Endothelial cell of umbilical vein (primary cell): ENCODE measurements at regions of chr12 and their contacts with region 1.

Region 1: DNA sequence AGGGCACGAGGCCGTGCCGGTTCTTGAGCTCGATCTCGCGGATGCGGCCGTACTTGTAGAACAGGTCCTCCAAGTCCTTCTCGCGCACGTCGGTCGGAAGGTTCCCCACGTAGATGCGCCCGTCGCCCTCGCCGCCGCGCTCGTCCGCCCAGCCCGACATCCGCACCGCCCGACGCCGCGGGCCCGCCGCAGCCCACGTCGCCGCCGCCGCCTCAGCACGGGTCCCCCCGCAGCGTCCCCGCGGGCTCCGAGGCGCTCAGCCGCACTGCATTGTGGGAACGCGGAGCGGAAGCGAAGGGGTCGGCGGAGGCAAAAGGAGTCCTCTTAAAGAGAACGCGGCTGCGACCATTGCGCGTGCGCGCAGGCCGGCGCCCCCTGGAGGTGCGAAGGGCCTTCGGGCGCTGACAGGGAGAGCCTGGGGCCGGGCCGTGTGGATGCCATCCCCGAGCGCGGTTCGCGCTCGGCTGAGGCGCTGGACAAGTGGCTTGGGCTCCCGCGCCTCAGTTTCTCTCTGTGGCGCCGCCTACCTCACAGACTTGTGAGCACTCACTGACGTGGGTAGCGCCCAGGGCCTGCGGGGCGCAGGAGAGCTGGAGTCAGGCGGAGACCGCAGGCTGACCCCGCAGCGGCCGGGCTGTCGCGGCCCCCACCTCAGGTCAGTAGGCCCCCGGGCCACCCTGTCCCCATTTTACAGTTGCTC is at the start of gene SRSF9:
- DNase-seq: peak; percentile 96
- H3K4me3 ChIP-seq: peak within 1 kb of the TSS; percentile 54 to 90 (median 78)
- H3K27ac ChIP-seq: peak within 1 kb of the TSS; percentile 68
- H3K4me1 ChIP-seq: peaks cover 5% of the 10 kb centered on the region
- H3K27me3 ChIP-seq: no peaks in the 10 kb centered on the region
- CTCF ChIP-seq: peak; percentile 96 to 99
- POLR2A ChIP-seq: peak; percentile 87
- total RNA-seq, gene SRSF9: 226 and 238 TPM in 2 replicates

Region 2: GRCh38 chr12:120086801-120087621 is 382.6 kb before region 1 on chr12:
- CTCF ChIA-PET with region 1: no interaction called
- POLR2A ChIA-PET with region 1: no interaction called
- dilution Hi-C with region 1: no loop called
- intact Hi-C with region 1: no loop called
- DNase-seq: peak; percentile 99
- H3K4me3 ChIP-seq: peak overlapping the region in 2 of 3 experiments; percentile 17 to 37
- H3K27ac ChIP-seq: peak overlapping the region; percentile 11
- H3K4me1 ChIP-seq: peaks cover 6% of the 10 kb centered on the region
- H3K27me3 ChIP-seq: no peaks in the 10 kb centered on the region
- CTCF ChIP-seq: peak; percentile 98 to 100
- POLR2A ChIP-seq: peak; percentile 50

Region 3: GRCh38 chr12:120437754-120438494 is 31.7 kb before region 1 on chr12 and contains the start of gene COX6A1:
- CTCF ChIA-PET with region 1: interaction called, 6 read pairs
- POLR2A ChIA-PET with region 1: interaction called, 3 read pairs
- dilution Hi-C with region 1: no loop called
- intact Hi-C with region 1: loop called (anchors 1 kb)
- DNase-seq: peak; percentile 91
- H3K4me3 ChIP-seq: peak within 1 kb of the TSS; percentile 48 to 76 (median 49)
- H3K27ac ChIP-seq: peak within 1 kb of the TSS; percentile 2
- H3K4me1 ChIP-seq: peaks cover 14% of the 10 kb centered on the region
- H3K27me3 ChIP-seq: no peaks in the 10 kb centered on the region
- CTCF ChIP-seq: no peak
- POLR2A ChIP-seq: peak; percentile 93
- total RNA-seq, gene COX6A1: 299 and 302 TPM in 2 replicates

Region 4: DNA sequence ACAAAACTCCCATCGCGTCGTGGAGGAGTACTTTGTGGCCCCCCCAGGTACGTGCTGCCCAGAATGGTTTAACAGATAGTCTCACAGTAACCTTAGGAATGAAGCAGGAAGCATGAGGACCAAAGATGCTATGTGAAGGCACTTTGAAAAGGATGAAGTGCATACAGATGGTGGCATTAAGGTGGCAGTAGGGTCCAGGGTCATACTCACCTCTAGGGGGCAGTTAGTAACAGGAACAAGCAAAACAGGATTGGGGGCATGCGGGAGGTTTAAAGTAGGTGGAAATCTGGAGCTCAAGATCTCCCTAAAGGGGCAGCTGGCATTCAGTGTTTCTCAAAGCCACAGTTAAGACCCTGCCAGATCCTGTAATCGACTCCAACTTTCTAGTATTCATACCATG is 12.5 kb before region 1 on chr12:
- CTCF ChIA-PET with region 1: interaction called, 10 read pairs
- POLR2A ChIA-PET with region 1: interaction called, 4 read pairs
- dilution Hi-C with region 1: no loop called
- intact Hi-C with region 1: no loop called
- DNase-seq: no peak
- H3K4me3 ChIP-seq: no peak overlapping the region
- H3K27ac ChIP-seq: no peak overlapping the region
- H3K4me1 ChIP-seq: no peaks in the 10 kb centered on the region
- H3K27me3 ChIP-seq: no peaks in the 10 kb centered on the region
- CTCF ChIP-seq: peak in 1 of 2 donors; percentile 32
- POLR2A ChIP-seq: no peak

Region 5: DNA sequence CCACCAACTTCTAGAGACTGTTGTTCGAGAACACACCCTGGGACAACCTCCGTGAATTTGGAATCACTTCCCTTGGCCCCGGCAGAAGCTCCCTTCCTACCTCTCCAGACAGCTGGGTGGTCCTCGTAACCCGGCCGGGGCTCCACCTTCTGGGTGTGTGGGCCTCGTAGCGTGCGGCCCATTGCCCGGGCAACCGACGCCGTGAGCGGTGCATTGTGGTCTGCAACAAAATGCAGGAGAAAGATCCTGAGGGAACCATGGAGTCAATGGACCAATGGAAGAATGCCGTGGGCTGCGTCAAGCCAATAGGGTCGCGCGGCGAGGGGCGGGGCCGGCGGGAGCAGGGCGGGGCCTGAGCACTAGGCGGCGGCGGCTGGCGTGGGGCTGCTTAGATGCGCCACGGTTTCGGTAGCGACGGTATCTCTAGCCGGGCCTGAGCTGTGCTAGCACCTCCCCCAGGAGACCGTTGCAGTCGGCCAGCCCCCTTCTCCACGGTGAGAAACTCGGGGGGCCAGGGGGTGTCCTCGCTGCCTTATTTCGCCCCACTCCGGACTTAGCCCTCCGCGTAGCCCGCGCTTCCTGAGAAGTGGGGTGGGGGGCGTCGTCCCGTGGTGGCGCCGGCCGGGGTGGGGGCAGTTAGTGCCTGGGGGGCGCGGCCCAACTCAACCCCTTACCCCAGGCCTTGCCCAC is 26.3 kb after region 1 on chr12 and contains the start of gene DYNLL1:
- CTCF ChIA-PET with region 1: interaction called, 29 read pairs
- POLR2A ChIA-PET with region 1: interaction called, 24 read pairs
- dilution Hi-C with region 1: no loop called
- intact Hi-C with region 1: loop called (anchors 1 kb)
- DNase-seq: peak; percentile 98
- H3K4me3 ChIP-seq: peak within 1 kb of the TSS; percentile 64 to 98 (median 90)
- H3K27ac ChIP-seq: no peak within 1 kb of the TSS
- H3K4me1 ChIP-seq: peaks cover 15% of the 10 kb centered on the region
- H3K27me3 ChIP-seq: no peaks in the 10 kb centered on the region
- CTCF ChIP-seq: no peak
- POLR2A ChIP-seq: peak; percentile 99
- total RNA-seq, gene DYNLL1: 469 TPM in 2 replicates

Region 6: GRCh38 chr12:120528861-120529525 is 59.4 kb after region 1 on chr12 and contains the start of gene COQ5:
- CTCF ChIA-PET with region 1: no interaction called
- POLR2A ChIA-PET with region 1: no interaction called
- dilution Hi-C with region 1: no loop called
- intact Hi-C with region 1: loop called (anchors 2 kb)
- DNase-seq: peak; percentile 89
- H3K4me3 ChIP-seq: peak within 1 kb of the TSS; percentile 48 to 98 (median 77)
- H3K27ac ChIP-seq: peak within 1 kb of the TSS; percentile 79
- H3K4me1 ChIP-seq: peaks cover 15% of the 10 kb centered on the region
- H3K27me3 ChIP-seq: no peaks in the 10 kb centered on the region
- CTCF ChIP-seq: no peak
- POLR2A ChIP-seq: peak; percentile 88
- total RNA-seq, gene COQ5: 19.7 and 27.2 TPM in 2 replicates

Region 7: DNA sequence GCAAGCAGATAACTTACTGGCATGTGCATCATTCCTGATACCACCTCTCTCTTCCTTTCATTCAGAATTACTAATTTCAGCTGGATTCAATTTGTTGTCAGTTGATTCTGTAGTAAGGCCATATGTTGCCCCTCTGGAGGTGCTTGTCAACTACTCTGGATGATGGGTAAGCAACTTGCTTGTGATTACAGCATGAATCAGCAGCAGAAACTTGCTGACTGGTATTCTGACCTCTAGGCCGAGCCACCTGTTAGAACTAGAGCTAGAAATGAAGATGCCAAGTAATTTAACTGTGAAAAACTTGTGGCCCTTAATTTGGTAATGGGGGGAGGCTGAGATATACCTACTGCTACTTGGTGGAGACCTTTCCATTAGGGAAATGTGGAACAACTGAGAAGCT is 69.7 kb after region 1 on chr12:
- CTCF ChIA-PET with region 1: no interaction called
- POLR2A ChIA-PET with region 1: no interaction called
- dilution Hi-C with region 1: no loop called
- intact Hi-C with region 1: no loop called
- DNase-seq: peak; percentile 44
- H3K4me3 ChIP-seq: no peak overlapping the region
- H3K27ac ChIP-seq: peak overlapping the region; percentile 26
- H3K4me1 ChIP-seq: peaks cover 52% of the 10 kb centered on the region
- H3K27me3 ChIP-seq: no peaks in the 10 kb centered on the region
- CTCF ChIP-seq: no peak
- POLR2A ChIP-seq: no peak